Tibial artery (tissue), 4 donors: ENCODE measurements at regions of chr6 and their contacts with region 1.

Region 1: GRCh38 chr6:109382576-109383437 is 540 bp upstream of the CD164 start:
- DNase-seq: peak; percentile 93 to 96
- H3K4me3 ChIP-seq: peak overlapping the region; percentile 84 to 95
- H3K27ac ChIP-seq: peak overlapping the region; percentile 98 to 100
- H3K4me1 ChIP-seq: peaks cover 0 to 36% (median 16%) of the 10 kb centered on the region in 4 donors
- H3K27me3 ChIP-seq: no peaks in the 10 kb centered on the region
- CTCF ChIP-seq: peak; percentile 43 to 62

Region 2: DNA sequence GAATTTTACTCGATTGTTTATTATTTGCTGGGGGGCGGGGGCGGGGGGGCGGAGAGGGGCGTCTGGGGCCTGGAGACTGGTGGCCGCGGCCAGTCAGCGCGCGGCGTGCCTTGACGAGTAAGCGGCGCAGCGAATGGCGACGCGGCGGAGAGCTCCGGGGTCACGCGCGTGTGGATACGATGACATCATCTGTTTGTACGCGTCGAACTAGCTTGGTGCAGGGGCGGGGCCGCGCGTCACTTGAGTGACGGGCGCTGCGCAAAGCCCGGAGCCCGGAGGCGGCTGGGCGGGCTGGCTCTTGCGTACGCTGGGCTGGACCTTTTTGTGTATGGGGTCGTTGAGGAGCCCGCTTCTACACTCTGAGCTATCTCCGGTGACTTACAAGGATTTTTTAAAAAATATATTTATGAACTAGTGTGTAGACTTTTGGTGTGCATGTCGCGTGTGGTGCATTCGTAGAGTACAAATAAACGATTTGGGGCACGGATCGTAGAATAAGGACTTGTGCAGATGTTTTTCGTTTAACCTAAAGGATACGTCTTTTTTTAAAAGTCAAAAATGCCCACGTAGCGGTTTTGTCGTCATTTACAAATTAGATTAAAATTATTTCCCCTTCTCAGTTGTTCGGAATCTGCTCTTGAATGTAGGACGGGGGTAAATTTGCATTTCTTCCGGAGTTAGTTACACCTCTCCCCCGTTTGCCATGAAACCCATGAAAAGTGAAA is 824.3 kb before region 1 on chr6:
- intact Hi-C with region 1: loop called (anchors 5 kb)
- DNase-seq: peak; percentile 98 to 99
- H3K4me3 ChIP-seq: peak overlapping the region; percentile 86 to 97
- H3K27ac ChIP-seq: peak overlapping the region; percentile 97 to 99
- H3K4me1 ChIP-seq: peaks cover 0 to 31% (median 16%) of the 10 kb centered on the region in 4 donors
- H3K27me3 ChIP-seq: no peaks in the 10 kb centered on the region
- CTCF ChIP-seq: no peak

Region 3: DNA sequence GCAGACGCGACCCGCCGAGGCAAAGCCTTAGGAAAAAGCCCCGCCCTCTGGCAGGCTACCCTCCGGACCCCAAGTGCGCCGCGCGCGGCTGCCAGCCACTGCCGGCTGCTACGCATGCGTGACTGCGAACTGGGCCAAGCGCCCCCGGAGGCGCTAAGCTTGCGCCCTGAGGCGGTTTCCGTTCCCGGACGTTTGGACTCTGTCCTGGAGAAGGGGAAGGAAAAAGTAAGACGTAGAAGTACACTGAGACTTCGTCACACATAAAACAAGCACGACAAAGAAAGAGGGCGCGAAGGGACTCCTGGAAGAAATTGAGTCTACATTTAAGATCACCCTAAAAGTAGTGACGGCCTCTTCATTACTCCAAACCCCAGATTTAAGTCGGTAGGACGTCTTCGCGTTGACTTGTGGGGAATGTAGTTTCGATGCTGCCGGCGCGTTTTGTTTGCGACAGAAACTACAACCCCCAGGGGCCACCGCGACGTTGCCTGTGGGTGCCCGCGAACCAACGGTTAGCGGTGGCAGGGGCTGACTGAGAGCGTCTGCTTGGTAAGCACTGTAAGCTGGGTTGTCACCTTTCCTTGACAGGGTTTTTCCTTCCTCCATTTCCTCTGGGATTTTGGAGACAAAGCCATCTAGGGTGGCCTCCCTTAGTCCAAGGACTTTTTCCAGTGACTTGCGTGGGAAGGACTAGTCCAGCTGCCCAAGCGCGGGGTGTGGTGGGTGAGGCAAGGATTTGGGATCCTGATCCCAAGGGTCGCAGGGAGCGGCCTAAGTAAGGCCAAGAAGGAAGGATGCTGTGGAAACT is 287.6 kb before region 1 on chr6 and contains the start of gene CEP57L1:
- intact Hi-C with region 1: loop called (anchors 10 kb)
- DNase-seq: peak; percentile 96 to 98
- H3K4me3 ChIP-seq: peak within 1 kb of the TSS; percentile 64 to 74
- H3K27ac ChIP-seq: peak within 1 kb of the TSS; percentile 96 to 97
- H3K4me1 ChIP-seq: peaks cover 0 to 36% (median 24%) of the 10 kb centered on the region in 4 donors
- H3K27me3 ChIP-seq: no peaks in the 10 kb centered on the region
- CTCF ChIP-seq: peak in 1 of 2 experiments; percentile 9

Region 4: DNA sequence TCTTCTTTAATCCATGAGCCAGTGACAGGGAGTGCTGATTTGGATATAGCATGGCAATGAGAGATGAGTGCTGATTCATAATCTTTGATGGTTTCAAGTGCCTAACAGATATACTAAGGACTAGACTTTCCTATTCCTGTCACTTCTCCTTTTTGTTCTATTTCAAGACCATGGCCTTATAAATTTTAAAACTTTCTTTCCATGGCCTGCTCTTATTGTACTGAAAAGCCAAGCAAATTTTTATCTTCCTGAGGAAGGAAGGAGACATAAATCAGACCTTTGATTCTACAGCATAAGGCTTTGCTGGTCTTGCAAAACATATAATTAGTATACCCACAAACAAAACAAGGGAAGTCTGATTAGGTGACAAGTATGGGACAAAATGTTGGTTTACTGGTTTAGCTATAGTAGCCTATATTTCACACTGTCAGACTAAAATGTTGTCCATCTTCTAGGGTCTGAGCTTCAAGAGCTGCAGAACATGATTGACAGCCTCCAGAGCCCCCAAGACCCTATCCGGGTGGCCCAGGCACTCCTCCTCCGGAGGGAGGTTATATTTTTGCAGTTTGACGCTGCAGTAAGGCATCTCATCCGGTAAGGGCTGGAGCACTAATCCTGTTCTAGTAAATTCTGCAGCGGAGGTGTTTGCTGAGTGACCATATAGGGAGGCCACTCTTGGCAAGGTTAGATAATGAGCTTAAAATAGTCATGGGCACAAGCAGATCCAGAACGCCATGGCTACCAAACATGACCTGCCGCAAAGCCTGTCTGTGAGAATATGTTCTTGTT is 82.8 kb before region 1 on chr6:
- intact Hi-C with region 1: loop called (anchors 5 kb)
- DNase-seq: peak; percentile 58 to 86
- H3K4me3 ChIP-seq: no peak overlapping the region
- H3K27ac ChIP-seq: peak overlapping the region; percentile 84 to 85
- H3K4me1 ChIP-seq: peaks cover 0 to 81% (median 41%) of the 10 kb centered on the region in 4 donors
- H3K27me3 ChIP-seq: no peaks in the 10 kb centered on the region
- CTCF ChIP-seq: peak; percentile 13 to 26

Region 5: GRCh38 chr6:109482905-109483735 is 100.3 kb after region 1 on chr6 and contains the start of gene ZBTB24:
- intact Hi-C with region 1: loop called (anchors 2 kb)
- DNase-seq: peak; percentile 86 to 95
- H3K4me3 ChIP-seq: peak within 1 kb of the TSS; percentile 99
- H3K27ac ChIP-seq: peak within 1 kb of the TSS; percentile 89 to 92
- H3K4me1 ChIP-seq: peaks cover 0 to 51% (median 31%) of the 10 kb centered on the region in 4 donors
- H3K27me3 ChIP-seq: no peaks in the 10 kb centered on the region
- CTCF ChIP-seq: no peak